Activated naive CD8-positive, alpha-beta T cell treated with anti-CD3 and anti-CD28 coated beads, Interleukin-2, amount 10 ng/mL, durations not matched to agents 7 days and 5 days (primary cell): ENCODE measurements at regions of chr7 and their contacts with region 1.

Region 1: GRCh38 chr7:54978364-54979118 is 40.3 kb upstream of the EGFR start:
- DNase-seq: no peak
- ATAC-seq: no peak
- H3K4me3 Mint-ChIP-seq: no peak overlapping the region
- H3K27ac Mint-ChIP-seq: no peak overlapping the region
- H3K4me1 Mint-ChIP-seq: no peaks in the 10 kb centered on the region
- H3K27me3 Mint-ChIP-seq: no peaks in the 10 kb centered on the region

Region 2: GRCh38 chr7:54967384-54967783 is 11.2 kb before region 1 on chr7:
- POLR2A ChIA-PET with region 1: interaction called, 10 read pairs
- DNase-seq: no peak
- ATAC-seq: no peak
- H3K4me3 Mint-ChIP-seq: no peak overlapping the region
- H3K27ac Mint-ChIP-seq: no peak overlapping the region
- H3K4me1 Mint-ChIP-seq: no peaks in the 10 kb centered on the region
- H3K27me3 Mint-ChIP-seq: no peaks in the 10 kb centered on the region